Right ventricle myocardium superior (tissue), 1 donor: ENCODE measurements at regions of chr7 and their contacts with region 1.

Region 1: DNA sequence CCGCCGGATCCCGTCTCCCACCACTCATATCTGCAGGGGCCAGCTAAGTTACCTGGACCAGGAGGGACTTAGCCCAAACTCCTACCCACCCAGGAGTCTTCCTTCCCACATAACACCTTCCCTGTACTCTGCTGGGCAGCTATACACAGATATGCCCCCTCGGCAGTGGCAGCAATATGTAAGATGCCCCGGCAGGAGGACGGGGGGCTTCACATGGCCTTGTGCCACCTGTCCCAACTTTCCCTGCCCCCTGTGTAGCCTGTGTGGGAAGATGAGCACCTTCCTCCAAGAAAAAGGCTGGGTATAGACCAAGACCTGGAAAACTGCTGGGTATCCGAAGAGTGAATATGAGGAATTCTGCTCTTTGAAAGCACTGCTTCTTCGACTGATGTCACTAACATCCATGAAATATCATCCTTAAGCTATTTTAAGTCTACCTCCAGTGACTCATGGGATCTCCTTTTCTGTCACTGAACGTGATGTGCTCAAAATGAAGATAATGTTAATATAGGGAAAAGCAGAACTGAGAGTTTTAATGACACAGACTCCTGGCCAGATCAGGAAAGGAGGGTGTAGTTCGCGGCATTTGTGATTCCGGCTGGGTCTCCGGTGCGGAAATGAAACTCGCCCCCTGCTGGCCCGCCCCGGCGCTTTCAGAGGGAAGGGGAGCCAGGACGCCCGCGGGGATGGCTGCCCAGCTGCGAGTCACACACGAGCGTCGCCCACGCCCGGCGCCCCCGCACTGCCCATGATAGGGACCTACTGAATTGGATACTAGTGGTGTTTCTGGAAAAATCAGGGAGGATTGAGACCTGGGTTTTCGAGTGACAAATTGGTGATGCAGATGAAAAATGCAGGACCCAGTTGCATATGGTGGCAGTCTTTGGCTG is 256.9 kb upstream of the NFE2L3 start:
- DNase-seq: peak; percentile 79
- ATAC-seq: peak; percentile 89

Region 2: DNA sequence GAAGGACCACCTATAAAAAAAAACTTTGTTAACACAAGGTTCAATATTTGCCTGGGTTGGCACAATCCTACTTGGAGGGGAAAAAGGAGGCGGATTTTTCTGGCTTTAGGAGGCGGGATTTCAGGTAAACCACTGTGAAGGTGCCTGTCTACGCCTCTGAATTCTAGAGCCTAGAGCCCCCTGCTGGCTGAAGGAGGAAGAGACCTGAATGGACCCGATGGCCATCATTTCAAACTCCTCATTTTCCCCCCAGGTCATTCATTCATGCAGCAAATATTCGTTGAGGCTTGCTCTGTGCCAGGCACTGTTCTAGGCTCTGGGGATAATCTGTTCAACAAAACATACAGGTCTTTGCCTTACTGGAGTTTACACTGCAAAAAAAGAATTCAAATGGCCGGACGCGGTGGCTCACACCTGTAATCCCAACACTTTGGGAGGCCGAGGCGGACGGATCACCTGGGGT is 166.6 kb after region 1 on chr7:
- intact Hi-C with region 1: loop called (anchors 2 kb)
- DNase-seq: peak; percentile 66
- ATAC-seq: peak; percentile 82

Region 3: DNA sequence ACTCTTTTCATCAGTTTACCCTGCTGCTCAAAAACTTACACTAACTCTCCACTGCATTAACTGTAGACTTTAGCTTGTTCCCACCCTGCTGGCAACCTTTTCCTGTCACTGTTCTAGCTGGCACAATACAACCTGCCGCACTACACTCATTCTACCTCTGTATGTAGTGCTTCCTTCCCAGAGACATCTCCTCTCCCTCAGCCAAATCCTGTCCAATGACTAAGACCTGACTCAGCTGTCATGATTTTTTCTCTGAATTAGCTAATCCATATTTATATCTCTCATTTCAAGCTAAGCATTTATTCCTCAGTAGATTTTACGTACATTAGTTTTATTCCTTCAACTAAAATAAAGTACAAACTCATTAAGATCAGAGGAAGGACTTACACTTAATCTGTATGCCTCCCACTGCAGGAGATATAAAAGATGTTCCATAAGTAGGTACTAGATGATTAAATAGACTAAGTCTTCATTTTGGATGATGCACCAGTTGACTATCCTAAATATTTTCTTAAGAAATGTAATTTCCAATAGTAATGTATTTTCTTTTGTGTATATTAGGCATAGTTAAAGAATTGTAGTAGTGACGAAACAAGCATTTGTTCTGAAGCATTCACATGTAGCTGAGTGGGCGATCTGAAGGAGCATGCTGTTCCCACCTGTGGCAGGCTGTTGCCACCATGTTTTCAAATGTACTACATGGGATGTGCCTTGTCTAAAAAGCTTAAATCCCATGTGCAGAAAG is 780.2 kb after region 1 on chr7:
- intact Hi-C with region 1: loop called (anchors 10 kb)
- DNase-seq: no peak
- ATAC-seq: no peak

Region 4: GRCh38 chr7:27160546-27161213 is 1265.5 kb after region 1 on chr7:
- intact Hi-C with region 1: loop called (anchors 10 kb)
- DNase-seq: peak; percentile 92
- ATAC-seq: peak; percentile 91